ENCODE measurements at regions of chr20 and their contacts with region 1.

Region 1: DNA sequence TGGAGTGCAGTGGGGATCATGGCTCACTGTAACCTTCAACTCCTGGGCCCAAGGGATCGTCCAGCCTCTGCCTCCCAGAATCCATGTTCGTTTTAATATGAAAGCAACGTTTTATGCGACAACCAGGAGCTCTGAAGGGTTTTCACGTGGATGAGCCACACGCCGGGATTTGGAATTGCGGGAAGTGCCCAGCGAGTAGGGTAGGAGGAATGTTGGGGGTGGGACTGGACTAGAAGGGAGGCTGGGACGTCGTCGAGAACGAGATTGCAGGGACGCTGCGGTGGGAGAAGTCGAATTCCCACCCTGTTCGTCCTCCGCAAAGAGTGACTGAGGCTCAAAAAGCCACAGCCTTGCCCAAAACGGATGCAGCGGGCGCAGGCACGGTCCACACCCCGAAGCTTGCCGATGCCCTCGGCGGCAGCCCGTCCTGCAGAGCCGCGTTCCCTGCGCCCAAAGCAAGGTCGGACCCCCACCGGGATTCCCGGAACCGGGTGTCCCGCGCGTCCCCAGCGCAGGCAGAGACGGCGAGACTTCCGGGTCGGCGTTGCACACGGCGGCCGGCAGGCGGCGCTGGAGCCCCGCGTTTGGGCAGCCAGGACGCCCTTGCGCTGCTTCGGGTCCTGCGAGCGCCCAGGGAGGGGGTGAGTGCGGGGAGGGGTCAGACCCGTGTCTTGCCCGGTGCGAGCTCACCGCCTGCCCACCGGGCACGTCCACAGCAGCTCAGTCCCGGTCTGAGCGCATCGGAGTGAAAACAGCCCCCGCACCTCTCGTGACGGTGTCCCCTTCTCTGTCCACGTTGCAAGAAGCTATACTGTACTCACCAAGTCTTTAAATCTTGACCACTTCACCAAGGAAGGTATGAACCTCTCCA is 87.8 kb downstream of the DHX35 start:
- DNase-seq: peak; percentile 82
- H3K4me3 ChIP-seq: peak overlapping the region; percentile 64
- H3K27ac ChIP-seq: no peak overlapping the region
- H3K4me1 ChIP-seq: peaks cover 11% of the 10 kb centered on the region
- CTCF ChIP-seq: peak; percentile 93

Region 2: GRCh38 chr20:39081255-39081654 is 31.3 kb after region 1 on chr20:
- CTCF ChIA-PET with region 1: interaction called, 12 read pairs
- POLR2A ChIA-PET with region 1: interaction called, 11 read pairs
- intact Hi-C with region 1: loop called (anchors 1 kb)
- DNase-seq: peak; percentile 71
- H3K4me3 ChIP-seq: no peak overlapping the region
- H3K27ac ChIP-seq: no peak overlapping the region
- H3K4me1 ChIP-seq: no peaks in the 10 kb centered on the region
- CTCF ChIP-seq: peak; percentile 90

Region 3: DNA sequence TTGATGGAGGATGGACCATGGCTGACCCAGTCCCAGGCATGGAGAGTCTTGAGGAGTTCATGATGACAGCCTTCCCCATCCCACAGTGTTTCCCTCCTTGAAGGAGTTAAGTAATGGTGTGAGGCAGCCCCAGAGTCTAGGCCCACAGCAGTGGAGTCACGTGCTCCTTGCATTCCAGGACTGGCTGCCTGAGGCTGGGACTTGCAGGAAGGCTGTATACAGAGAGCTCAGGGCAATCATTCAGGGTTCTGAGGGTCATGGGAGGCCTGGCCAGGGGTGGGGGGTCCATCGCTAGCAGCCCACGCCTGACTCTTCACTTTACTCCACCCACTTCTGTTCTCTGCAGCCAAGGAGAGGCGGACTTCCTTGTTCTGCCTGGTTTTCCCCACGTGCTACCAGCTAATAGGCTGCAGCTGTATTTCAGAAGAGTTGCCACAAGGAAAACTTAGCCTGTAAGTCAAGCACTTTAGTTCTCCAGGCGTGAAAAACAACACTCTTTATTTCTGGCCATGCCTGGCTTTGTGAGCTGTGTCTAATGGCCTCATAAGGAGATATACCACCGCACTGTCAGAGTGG is 184.7 kb after region 1 on chr20:
- CTCF ChIA-PET with region 1: no interaction called
- POLR2A ChIA-PET with region 1: no interaction called
- intact Hi-C with region 1: no loop called
- DNase-seq: no peak
- H3K4me3 ChIP-seq: no peak overlapping the region
- H3K27ac ChIP-seq: no peak overlapping the region
- H3K4me1 ChIP-seq: no peaks in the 10 kb centered on the region
- CTCF ChIP-seq: no peak